WTC11 (cell line): ENCODE measurements at regions of chr11 and their contacts with region 1.

Region 1: DNA sequence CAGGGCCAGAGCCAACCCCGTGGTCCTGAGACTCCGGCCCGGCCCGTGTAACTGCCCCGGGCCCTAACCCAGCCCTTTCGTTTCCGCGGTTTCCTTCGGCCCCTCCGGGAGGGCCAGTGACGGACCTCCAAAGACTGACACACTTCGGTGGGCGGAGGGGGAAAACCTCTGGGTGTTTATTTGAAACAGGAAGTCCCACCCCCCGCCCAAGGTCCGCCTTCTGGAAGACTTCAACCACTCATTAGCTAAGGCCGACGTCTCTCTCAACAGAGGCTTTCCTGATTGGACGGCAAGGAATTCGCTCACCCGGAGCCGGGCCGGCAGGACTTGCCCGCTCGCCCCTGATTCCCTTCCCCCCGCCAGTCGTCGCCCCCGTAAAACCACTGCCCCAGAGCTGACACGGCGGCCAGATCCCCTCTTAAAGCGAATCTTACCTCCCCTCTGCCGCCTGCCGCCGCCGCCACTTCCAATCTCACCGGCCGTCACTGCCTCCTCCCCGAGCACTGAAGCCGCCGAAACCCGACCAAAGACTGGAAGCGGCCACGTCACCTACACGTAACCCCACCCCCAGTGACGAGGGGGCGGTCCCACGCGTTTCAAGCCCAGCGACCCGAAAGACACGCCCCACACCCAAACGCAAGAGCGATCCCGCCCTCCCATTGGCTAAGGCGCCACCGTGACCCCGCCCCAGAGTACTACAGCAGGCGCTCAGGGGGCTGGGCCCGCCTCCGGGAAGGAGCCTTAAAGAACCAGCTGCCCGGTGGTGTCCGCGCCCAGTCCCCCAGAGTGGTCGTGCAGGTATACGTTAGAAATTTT is at the start of gene STX5:
- DNase-seq: peak; percentile 100
- ATAC-seq: peak; percentile 91
- H3K4me3 Mint-ChIP-seq: peak within 1 kb of the TSS; percentile 100
- H3K27ac Mint-ChIP-seq: peak within 1 kb of the TSS; percentile 100
- H3K4me1 Mint-ChIP-seq: peaks cover 16% of the 10 kb centered on the region
- H3K27me3 Mint-ChIP-seq: no peaks in the 10 kb centered on the region
- CTCF ChIP-seq: no peak
- total RNA-seq, gene STX5: 27.2 to 30.2 TPM (median 28.0 TPM) in 3 replicates

Region 2: GRCh38 chr11:62166371-62166770 is 665.4 kb before region 1 on chr11:
- CTCF ChIA-PET with region 1: no interaction called
- POLR2A ChIA-PET with region 1: interaction called, 12 read pairs
- DNase-seq: no peak
- ATAC-seq: no peak
- H3K4me3 Mint-ChIP-seq: no peak overlapping the region
- H3K27ac Mint-ChIP-seq: no peak overlapping the region
- H3K4me1 Mint-ChIP-seq: 0 out of 2 replicates have a peak, but pooled peaks cover 1% of the 10 kb centered on the region
- H3K27me3 Mint-ChIP-seq: peaks cover 3% of the 10 kb centered on the region
- CTCF ChIP-seq: no peak

Region 3: DNA sequence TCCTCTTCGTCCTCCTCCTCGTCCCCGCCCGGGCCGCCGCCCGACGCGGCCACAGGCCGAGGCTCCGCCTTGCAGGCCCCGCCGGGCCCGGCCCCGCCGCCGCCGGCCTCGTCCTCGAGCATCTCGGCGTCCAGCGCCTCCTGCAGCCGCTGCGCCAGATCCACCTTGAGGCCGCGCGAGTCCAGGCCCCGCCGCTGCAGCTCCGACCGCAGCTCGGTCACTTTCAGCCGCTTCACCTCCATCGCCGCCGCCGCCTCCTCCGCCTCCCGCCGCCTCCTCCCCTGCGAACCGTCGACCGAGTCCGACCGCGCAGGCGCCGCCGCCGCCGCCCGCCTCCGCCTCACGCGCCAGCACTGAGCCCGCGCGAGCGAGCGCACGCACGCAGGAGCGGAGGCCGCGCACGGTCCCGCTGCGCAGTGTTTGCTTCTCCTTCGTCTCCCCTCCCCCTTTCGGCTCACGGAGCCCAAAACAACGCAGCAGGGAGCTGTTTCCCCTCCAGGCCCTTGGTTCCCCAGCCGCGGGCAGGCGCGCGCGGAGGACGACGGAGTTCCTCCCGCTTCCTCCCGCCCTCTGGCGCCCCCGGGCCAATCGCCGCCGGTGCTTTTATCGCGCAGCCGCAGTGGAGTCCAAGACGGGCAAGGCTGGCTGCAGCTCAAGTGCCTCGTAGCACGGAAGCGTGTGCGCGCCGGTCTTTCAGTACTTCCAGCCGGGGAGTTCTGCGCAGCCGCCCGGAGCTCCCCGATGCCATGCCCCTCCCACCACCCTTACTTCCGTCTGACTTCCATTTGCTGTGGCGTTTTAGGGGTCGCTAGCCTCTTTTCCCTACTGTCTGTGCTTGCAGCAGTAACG is 104.6 kb before region 1 on chr11 and contains the start of gene HNRNPUL2:
- CTCF ChIA-PET with region 1: interaction called, 3 read pairs
- POLR2A ChIA-PET with region 1: interaction called, 11 read pairs
- DNase-seq: peak; percentile 98
- ATAC-seq: peak; percentile 89
- H3K4me3 Mint-ChIP-seq: peak within 1 kb of the TSS; percentile 98
- H3K27ac Mint-ChIP-seq: peak within 1 kb of the TSS; percentile 100
- H3K4me1 Mint-ChIP-seq: peaks cover 25% of the 10 kb centered on the region
- H3K27me3 Mint-ChIP-seq: peaks cover 4% of the 10 kb centered on the region; the same call in 1 of the 2 replicates
- CTCF ChIP-seq: no peak
- total RNA-seq, gene HNRNPUL2: 42.1 to 42.9 TPM (median 42.2 TPM) in 3 replicates

Region 4: DNA sequence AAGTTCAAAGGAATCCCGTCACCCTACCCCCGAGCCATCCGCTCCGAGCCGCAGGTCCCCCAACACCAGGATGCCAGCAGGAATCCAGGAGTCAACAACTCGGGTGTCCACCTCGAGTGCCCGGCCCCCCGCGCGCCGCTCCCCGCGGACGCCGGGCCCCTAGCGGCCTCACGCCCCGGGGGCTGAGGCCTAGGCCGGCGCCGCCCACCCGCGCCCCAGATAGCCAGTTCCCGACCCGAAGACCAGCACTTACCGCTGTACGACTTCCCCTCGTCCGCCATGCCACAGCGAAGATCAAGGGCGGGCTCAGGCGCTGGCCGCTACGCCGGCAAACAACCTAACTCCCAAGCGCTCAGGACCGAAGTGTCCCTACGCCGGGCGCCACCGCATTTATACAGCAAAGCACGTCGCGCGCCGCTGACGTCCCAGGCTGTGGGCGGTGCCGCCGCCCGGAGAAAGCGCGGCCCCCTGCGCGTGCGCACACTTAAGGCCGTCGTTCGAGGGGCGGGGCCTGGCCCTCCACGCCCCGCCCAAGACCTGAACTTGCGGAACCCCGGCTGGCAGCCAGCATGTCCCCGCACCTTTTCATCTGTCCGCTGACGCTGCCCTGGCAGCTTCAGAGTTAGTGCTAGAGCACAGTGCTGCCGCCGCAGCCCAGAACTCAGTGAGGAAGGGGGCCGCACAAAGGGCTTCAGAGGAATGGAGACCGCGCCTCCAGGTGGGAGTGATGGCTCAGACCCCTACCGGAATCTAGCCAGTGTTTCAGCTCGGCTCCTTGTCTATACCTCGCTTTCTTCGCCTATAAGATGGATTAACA is 26.4 kb before region 1 on chr11 and contains the start of gene NXF1:
- CTCF ChIA-PET with region 1: interaction called, 6 read pairs
- POLR2A ChIA-PET with region 1: interaction called, 14 read pairs
- DNase-seq: peak; percentile 95
- ATAC-seq: peak; percentile 85
- H3K4me3 Mint-ChIP-seq: peak within 1 kb of the TSS; percentile 98
- H3K27ac Mint-ChIP-seq: peak within 1 kb of the TSS; percentile 96
- H3K4me1 Mint-ChIP-seq: peaks cover 22% of the 10 kb centered on the region
- H3K27me3 Mint-ChIP-seq: no peaks in the 10 kb centered on the region
- CTCF ChIP-seq: no peak
- total RNA-seq, gene NXF1: 43.2 to 44.7 TPM (median 44.3 TPM) in 3 replicates

Region 5: GRCh38 chr11:62816557-62816956 is 15.2 kb before region 1 on chr11:
- CTCF ChIA-PET with region 1: no interaction called
- POLR2A ChIA-PET with region 1: interaction called, 12 read pairs
- DNase-seq: no peak
- ATAC-seq: no peak
- H3K4me3 Mint-ChIP-seq: no peak overlapping the region
- H3K27ac Mint-ChIP-seq: no peak overlapping the region
- H3K4me1 Mint-ChIP-seq: no peaks in the 10 kb centered on the region
- H3K27me3 Mint-ChIP-seq: no peaks in the 10 kb centered on the region
- CTCF ChIP-seq: no peak

Region 6: DNA sequence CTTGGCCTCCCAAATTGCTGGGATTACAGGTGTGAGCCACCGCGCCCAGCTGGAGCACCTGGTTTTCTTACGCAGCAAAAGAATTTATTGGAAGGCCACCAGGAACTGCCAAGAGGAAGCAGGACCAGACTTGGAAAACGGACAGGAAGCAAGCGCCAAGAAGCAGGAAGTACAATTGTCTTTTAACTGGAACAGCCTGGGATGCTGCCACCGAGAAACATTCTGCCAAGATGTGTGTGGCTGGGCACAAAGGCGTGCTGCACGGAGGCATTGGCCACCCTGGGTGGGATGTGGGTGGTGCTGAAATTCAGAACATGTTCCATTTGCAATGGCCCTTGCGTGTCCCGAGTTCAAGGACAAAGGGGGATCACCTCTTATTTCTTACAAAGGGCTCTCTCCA is 64.3 kb after region 1 on chr11:
- CTCF ChIA-PET with region 1: no interaction called
- POLR2A ChIA-PET with region 1: no interaction called
- DNase-seq: no peak
- ATAC-seq: no peak
- H3K4me3 Mint-ChIP-seq: no peak overlapping the region
- H3K27ac Mint-ChIP-seq: no peak overlapping the region
- H3K4me1 Mint-ChIP-seq: peaks cover 15% of the 10 kb centered on the region
- H3K27me3 Mint-ChIP-seq: no peaks in the 10 kb centered on the region; the same call in none of the 2 replicates
- CTCF ChIP-seq: no peak